PC-3 (cell line): ENCODE measurements at regions of chr2 and their contacts with region 1.

Region 1: GRCh38 chr2:84686783-84687476 is 170.6 kb downstream of the DNAH6 start:
- DNase-seq: no peak
- ATAC-seq: no peak
- H3K4me3 ChIP-seq: no peak overlapping the region
- H3K27ac ChIP-seq: no peak overlapping the region
- H3K4me1 ChIP-seq: no peaks in the 10 kb centered on the region
- H3K27me3 ChIP-seq: peaks cover 84% of the 10 kb centered on the region
- CTCF ChIP-seq: no peak

Region 2: GRCh38 chr2:84653300-84653699 is 33.6 kb before region 1 on chr2:
- CTCF ChIA-PET with region 1: no interaction called
- POLR2A ChIA-PET with region 1: no interaction called
- intact Hi-C with region 1: no loop called
- DNase-seq: no peak
- ATAC-seq: no peak
- H3K4me3 ChIP-seq: no peak overlapping the region
- H3K27ac ChIP-seq: no peak overlapping the region
- H3K4me1 ChIP-seq: no peaks in the 10 kb centered on the region
- H3K27me3 ChIP-seq: peaks cover 67% of the 10 kb centered on the region
- CTCF ChIP-seq: peak; percentile 54

Region 3: GRCh38 chr2:84735389-84735788 is 48.5 kb after region 1 on chr2:
- CTCF ChIA-PET with region 1: interaction called, 11 read pairs
- POLR2A ChIA-PET with region 1: no interaction called
- intact Hi-C with region 1: no loop called
- DNase-seq: no peak
- ATAC-seq: no peak
- H3K4me3 ChIP-seq: no peak overlapping the region
- H3K27ac ChIP-seq: no peak overlapping the region
- H3K4me1 ChIP-seq: no peaks in the 10 kb centered on the region
- H3K27me3 ChIP-seq: peaks cover 26% of the 10 kb centered on the region; the same call in 1 of the 2 replicates
- CTCF ChIP-seq: no peak